CD4-positive, alpha-beta T cell (primary cell): ENCODE measurements at regions of chr7 and their contacts with region 1.

Region 1: GRCh38 chr7:157336383-157337315 is at the start of gene DNAJB6:
- DNase-seq: peak; percentile 92 to 98 (median 95)
- ATAC-seq: peak; percentile 81
- H3K4me3 ChIP-seq: peak within 1 kb of the TSS; percentile 95
- H3K4me3 Mint-ChIP-seq: peak within 1 kb of the TSS; percentile 98
- H3K27ac ChIP-seq: peak within 1 kb of the TSS; percentile 85 to 87
- H3K27ac Mint-ChIP-seq: peak within 1 kb of the TSS; percentile 99
- H3K4me1 ChIP-seq: peaks cover 45% of the 10 kb centered on the region
- H3K4me1 Mint-ChIP-seq: peaks cover 38% of the 10 kb centered on the region
- H3K27me3 ChIP-seq: peaks cover 0 to 3% of the 10 kb centered on the region in 2 experiments
- H3K27me3 Mint-ChIP-seq: peaks cover 4% of the 10 kb centered on the region
- CTCF ChIP-seq: no peak
- total RNA-seq, gene DNAJB6: 232 to 242 TPM

Region 2: DNA sequence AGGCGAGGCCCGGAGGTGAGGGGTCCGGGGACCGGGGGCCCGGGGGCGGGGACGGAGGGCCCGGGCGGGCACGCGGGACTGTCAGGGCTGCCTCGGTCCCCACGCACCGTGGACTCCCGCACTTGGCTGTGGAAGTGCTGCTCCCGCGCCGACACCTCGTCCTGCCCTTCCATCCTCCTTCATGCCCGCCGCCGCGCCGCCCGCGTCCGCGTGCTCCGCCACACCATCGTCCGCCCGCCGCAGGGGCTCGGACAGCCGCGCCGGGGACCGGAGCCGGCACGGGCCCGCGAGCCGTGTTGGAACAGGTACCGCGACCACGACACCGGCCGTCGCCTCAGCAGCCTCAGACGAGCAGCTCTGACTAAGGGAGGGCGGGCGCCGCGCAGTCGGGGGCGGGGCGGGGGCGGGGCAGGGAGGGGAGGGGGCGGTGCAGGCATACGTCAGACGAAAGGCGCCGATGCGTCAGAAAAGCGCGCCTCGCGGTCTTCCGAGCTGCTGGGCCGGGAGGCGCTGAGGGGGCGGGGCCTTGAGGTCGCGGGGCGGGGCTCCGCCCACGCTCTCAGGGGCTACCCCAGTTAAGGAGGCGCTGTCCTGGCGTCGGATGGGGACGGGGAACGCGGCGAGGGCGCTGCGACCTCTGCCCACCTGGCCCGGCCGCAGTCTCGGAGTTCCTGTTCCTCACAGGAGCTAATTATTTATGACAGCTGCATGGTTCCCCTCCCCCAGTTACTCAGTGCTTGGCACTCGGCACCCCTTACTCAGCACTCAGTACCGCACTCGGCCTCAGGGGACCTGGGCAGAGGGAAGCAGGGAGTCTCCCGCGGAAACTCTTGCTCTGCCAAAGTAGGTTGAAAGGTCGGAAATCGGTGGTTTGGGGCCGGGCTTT is 443.6 kb before region 1 on chr7 and contains the start of gene LMBR1:
- CTCF ChIA-PET with region 1: no interaction called
- POLR2A ChIA-PET with region 1: interaction called, 9 read pairs
- intact Hi-C with region 1: loop called in 1 of 2 experiments (anchors 2 kb)
- DNase-seq: peak; percentile 91 to 98 (median 94)
- ATAC-seq: peak; percentile 80
- H3K4me3 ChIP-seq: peak within 1 kb of the TSS; percentile 77
- H3K4me3 Mint-ChIP-seq: peak within 1 kb of the TSS; percentile 96
- H3K27ac ChIP-seq: peak within 1 kb of the TSS; percentile 73 to 83
- H3K27ac Mint-ChIP-seq: peak within 1 kb of the TSS; percentile 93
- H3K4me1 ChIP-seq: peaks cover 24% of the 10 kb centered on the region
- H3K4me1 Mint-ChIP-seq: peaks cover 54% of the 10 kb centered on the region
- H3K27me3 ChIP-seq: no peaks in the 10 kb centered on the region
- H3K27me3 Mint-ChIP-seq: no peaks in the 10 kb centered on the region
- CTCF ChIP-seq: peak; percentile 72
- total RNA-seq, gene LMBR1: 61.6 to 61.9 TPM

Region 3: GRCh38 chr7:156969972-156970420 is 366.7 kb before region 1 on chr7:
- CTCF ChIA-PET with region 1: no interaction called
- POLR2A ChIA-PET with region 1: interaction called, 3 read pairs
- intact Hi-C with region 1: loop called in 1 of 2 experiments (anchors 5 kb)
- DNase-seq: peak in 2 of 14 experiments; percentile 17 to 22
- ATAC-seq: peak; percentile 46
- H3K4me3 ChIP-seq: no peak overlapping the region
- H3K4me3 Mint-ChIP-seq: no peak overlapping the region
- H3K27ac ChIP-seq: no peak overlapping the region
- H3K27ac Mint-ChIP-seq: no peak overlapping the region
- H3K4me1 ChIP-seq: no peaks in the 10 kb centered on the region
- H3K4me1 Mint-ChIP-seq: no peaks in the 10 kb centered on the region
- H3K27me3 ChIP-seq: no peaks in the 10 kb centered on the region
- H3K27me3 Mint-ChIP-seq: no peaks in the 10 kb centered on the region
- CTCF ChIP-seq: peak; percentile 49

Region 4: GRCh38 chr7:157228864-157229422 is 107.7 kb before region 1 on chr7:
- CTCF ChIA-PET with region 1: no interaction called
- POLR2A ChIA-PET with region 1: no interaction called
- intact Hi-C with region 1: loop called (anchors 2 to 5 kb)
- DNase-seq: peak in 11 of 14 experiments; percentile 5 to 49 (median 25)
- ATAC-seq: peak; percentile 49
- H3K4me3 ChIP-seq: no peak overlapping the region
- H3K4me3 Mint-ChIP-seq: no peak overlapping the region
- H3K27ac ChIP-seq: no peak overlapping the region
- H3K27ac Mint-ChIP-seq: no peak overlapping the region
- H3K4me1 ChIP-seq: no peaks in the 10 kb centered on the region
- H3K4me1 Mint-ChIP-seq: no peaks in the 10 kb centered on the region
- H3K27me3 ChIP-seq: no peaks in the 10 kb centered on the region
- H3K27me3 Mint-ChIP-seq: no peaks in the 10 kb centered on the region
- CTCF ChIP-seq: peak; percentile 12

Region 5: GRCh38 chr7:157299613-157300368 is 36.9 kb before region 1 on chr7:
- CTCF ChIA-PET with region 1: interaction called, 4 read pairs
- POLR2A ChIA-PET with region 1: interaction called, 38 read pairs
- intact Hi-C with region 1: loop called (anchors 1 to 2 kb)
- DNase-seq: peak in 12 of 14 experiments; percentile 10 to 82 (median 39)
- ATAC-seq: peak; percentile 56
- H3K4me3 ChIP-seq: no peak overlapping the region
- H3K4me3 Mint-ChIP-seq: no peak overlapping the region
- H3K27ac ChIP-seq: no peak overlapping the region
- H3K27ac Mint-ChIP-seq: no peak overlapping the region
- H3K4me1 ChIP-seq: peaks cover 43% of the 10 kb centered on the region
- H3K4me1 Mint-ChIP-seq: peaks cover 32% of the 10 kb centered on the region
- H3K27me3 ChIP-seq: no peaks in the 10 kb centered on the region
- H3K27me3 Mint-ChIP-seq: no peaks in the 10 kb centered on the region
- CTCF ChIP-seq: no peak